ENCODE measurements at regions of chr18 and their contacts with region 1.

Region 1: DNA sequence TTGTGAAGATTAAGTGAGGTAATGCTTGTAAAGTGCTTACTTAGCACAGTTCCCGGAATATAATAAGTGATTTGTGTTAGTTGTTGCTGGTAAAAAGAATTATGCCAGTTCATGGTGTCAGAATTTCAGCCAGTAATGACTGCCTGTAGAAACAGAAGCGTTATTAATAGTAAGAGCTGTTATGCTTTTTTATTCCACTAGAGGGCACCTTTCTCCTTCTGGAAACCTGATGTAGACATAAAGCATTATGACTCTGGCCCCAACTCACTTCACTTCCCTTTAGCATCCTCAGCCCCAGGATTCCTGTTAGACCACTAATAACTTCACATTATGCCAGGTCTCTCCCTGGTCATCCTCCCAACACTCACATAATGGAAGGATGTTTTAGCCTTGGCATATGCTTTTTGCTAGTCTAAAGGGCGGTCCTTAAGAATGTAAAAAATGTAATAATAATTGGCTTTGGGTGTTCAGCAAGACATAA is 34.9 kb downstream of the C18orf54 start:
- DNase-seq: peak; percentile 34
- H3K4me3 ChIP-seq: no peak overlapping the region
- H3K27ac ChIP-seq: no peak overlapping the region
- H3K27me3 ChIP-seq: no peaks in the 10 kb centered on the region
- CTCF ChIP-seq: peak; percentile 76

Region 2: GRCh38 chr18:54357660-54358494 is 34.7 kb before region 1 on chr18 and contains the starts of genes C18orf54 and STARD6:
- CTCF ChIA-PET with region 1: interaction called, 35 read pairs
- POLR2A ChIA-PET with region 1: no interaction called
- DNase-seq: peak; percentile 67
- H3K4me3 ChIP-seq: peak within 1 kb of the TSS; percentile 89
- H3K27ac ChIP-seq: peak within 1 kb of the TSS; percentile 43
- H3K27me3 ChIP-seq: no peaks in the 10 kb centered on the region
- CTCF ChIP-seq: peak; percentile 33
- polyA plus RNA-seq, gene C18orf54: 2.7 and 3.8 TPM in 2 replicates
- polyA plus RNA-seq, gene STARD6: 0.14 TPM in 1 of 2 replicates, not detected in the other